Activated CD4-positive, alpha-beta T cell treated with anti-CD3 and anti-CD28 coated beads, Interleukin-2, amount 10 ng/mL, durations not matched to agents 7 days and 5 days (primary cell): ENCODE measurements at regions of chr4 and their contacts with region 1.

Region 1: DNA sequence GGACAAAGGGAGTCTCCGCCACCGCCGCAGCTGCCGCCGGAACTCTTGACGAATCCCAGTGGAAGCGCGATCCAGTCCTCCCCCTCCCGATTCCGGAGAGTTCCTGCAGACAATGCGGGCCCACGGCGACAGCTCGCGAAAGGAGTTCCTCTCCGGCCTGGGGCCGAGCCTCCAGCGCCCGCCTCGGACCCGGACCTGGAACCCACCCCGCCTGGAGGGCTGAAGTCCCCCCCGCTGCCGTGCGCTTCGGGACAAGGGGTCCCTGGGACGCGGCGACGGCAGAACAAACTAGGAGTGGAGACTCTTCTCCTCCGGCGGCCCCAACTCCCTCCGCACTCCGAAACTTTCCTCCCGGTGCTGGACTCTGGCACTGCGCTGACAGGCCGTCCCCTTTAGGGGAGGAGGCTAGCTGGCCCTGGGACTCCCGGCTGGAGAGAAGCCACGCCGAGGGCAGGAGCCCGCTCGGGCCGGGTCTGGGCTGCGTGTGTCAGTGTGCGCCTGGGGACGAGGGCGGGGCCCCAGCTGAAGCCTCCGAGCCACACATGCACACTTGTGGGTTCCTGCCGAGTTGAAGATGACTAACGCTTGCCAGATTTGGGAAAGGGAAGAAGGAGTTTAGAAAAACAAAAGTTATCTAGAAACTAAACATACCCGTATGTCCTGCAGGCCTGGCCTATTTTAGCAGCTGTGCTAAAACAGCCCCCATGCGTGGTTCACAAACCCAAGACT is at the start of gene ANTXR2:
- DNase-seq: peak; percentile 68
- H3K4me3 Mint-ChIP-seq: peak within 1 kb of the TSS; percentile 96
- H3K27ac Mint-ChIP-seq: peak within 1 kb of the TSS; percentile 94
- H3K4me1 Mint-ChIP-seq: peaks cover 75% of the 10 kb centered on the region
- H3K27me3 Mint-ChIP-seq: no peaks in the 10 kb centered on the region
- total RNA-seq, gene ANTXR2: 27.3 to 30.0 TPM

Region 2: DNA sequence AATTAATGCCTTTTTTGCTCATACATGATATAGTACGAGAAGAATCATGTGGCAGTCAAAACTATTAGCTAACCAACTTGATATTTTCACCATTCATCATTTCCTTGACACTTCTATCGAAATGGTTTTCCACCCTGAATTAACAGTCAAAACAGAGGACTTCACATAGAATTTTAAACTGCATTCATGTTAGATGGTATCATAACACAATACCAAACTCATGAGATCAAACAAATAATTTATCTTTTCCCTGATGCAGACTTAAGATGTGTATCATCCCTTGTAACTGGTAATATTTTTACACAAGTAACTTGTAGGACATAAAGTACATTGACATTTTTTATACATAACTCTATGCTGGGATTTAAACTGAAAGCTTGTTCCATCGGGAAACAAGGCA is 18.3 kb after region 1 on chr4:
- CTCF ChIA-PET with region 1: interaction called, 13 read pairs
- POLR2A ChIA-PET with region 1: no interaction called
- DNase-seq: no peak
- H3K4me3 Mint-ChIP-seq: no peak overlapping the region
- H3K27ac Mint-ChIP-seq: no peak overlapping the region
- H3K4me1 Mint-ChIP-seq: peaks cover 14% of the 10 kb centered on the region
- H3K27me3 Mint-ChIP-seq: peaks cover 16% of the 10 kb centered on the region

Region 3: DNA sequence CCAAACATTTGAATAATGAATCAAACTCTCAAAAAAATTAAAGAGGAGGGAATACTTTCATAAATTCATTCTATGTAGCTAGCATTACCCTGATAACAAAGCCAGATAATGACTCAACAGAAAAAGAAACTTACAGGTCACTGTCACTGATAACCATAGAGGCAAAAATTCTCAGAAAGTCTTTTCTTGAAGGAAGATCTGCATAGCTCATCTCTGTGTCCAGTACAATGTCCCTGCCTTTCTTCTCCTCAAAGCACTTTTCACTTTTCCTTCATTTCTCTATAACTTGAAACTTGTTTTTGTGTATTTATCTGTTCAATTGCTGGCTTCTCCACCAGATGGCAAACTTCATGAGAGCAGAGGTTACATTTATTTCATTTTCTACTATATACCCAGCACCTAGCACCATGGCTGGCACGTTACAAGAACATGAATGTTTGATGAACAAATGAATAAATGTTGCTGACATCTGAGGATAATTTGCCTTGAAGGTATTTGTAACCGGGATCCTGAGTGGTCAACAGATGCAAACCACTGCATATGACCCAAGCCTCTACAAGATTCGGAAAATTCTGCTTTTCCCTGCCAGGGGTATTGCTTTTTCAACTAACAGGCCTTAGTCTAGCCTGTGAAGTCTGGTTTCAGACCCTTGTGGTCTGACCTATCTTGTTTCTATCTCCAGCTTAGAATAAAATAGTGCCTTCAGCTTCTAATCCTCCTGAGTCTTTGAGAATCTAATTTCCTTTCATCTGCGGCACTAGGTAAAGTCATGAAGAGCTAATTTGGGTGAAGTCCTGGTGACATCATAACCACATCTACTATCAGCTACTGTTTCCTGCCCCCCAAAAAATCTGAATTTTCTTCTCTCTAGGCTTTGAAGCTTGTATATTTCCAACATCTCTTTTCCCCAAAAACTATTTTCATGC is 52.6 kb after region 1 on chr4:
- CTCF ChIA-PET with region 1: interaction called, 13 read pairs
- POLR2A ChIA-PET with region 1: interaction called, 4 read pairs
- DNase-seq: peak; percentile 68
- H3K4me3 Mint-ChIP-seq: peak overlapping the region; percentile 23
- H3K27ac Mint-ChIP-seq: peak overlapping the region; percentile 84
- H3K4me1 Mint-ChIP-seq: peaks cover 55% of the 10 kb centered on the region
- H3K27me3 Mint-ChIP-seq: no peaks in the 10 kb centered on the region

Region 4: DNA sequence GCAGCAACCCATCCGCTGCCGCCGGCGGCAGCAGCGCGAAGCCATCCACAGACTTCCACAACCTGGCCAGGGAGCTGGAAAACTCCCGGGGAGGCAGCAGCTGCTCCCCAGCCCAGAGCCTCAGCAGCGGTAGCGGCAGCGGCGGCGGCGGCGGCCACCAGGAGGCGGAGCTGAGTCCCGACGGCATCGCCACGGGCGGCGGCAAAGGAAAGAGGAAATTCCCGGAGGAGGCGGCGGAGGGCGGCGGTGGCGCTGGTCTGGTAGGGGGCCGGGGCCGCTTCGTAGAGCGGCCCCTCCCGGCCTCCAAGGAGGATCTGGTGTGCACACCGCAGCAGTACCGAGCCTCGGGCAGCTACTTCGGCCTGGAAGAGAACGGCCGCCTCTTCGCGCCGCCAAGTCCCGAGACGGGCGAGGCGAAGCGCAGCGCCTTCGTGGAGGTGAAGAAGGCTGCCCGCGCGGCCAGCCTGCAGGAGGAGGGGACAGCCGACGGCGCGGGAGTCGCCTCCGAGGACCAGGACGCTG is 129.3 kb after region 1 on chr4:
- CTCF ChIA-PET with region 1: interaction called, 11 read pairs
- POLR2A ChIA-PET with region 1: no interaction called
- DNase-seq: peak; percentile 73
- H3K4me3 Mint-ChIP-seq: peak overlapping the region; percentile 70
- H3K27ac Mint-ChIP-seq: peak overlapping the region; percentile 63
- H3K4me1 Mint-ChIP-seq: peaks cover 26% of the 10 kb centered on the region
- H3K27me3 Mint-ChIP-seq: peaks cover 43% of the 10 kb centered on the region